HCT116 (cell line): ENCODE measurements at regions of chr19 and their contacts with region 1.

Region 1: GRCh38 chr19:41144403-41144802 is 30.2 kb downstream of the CYP2F1 start:
- DNase-seq: peak; percentile 82
- ATAC-seq: peak; percentile 98
- H3K4me3 ChIP-seq: no peak overlapping the region
- H3K27ac ChIP-seq: no peak overlapping the region
- H3K4me1 ChIP-seq: peaks cover 0 to 4% of the 10 kb centered on the region in 2 experiments; a peak in 1 of 4 replicates
- H3K27me3 ChIP-seq: no peaks in the 10 kb centered on the region
- CTCF ChIP-seq: peak; percentile 82 to 86 (median 84)
- POLR2A ChIP-seq: no peak
- RAD21 ChIP-seq: peak; percentile 96

Region 2: DNA sequence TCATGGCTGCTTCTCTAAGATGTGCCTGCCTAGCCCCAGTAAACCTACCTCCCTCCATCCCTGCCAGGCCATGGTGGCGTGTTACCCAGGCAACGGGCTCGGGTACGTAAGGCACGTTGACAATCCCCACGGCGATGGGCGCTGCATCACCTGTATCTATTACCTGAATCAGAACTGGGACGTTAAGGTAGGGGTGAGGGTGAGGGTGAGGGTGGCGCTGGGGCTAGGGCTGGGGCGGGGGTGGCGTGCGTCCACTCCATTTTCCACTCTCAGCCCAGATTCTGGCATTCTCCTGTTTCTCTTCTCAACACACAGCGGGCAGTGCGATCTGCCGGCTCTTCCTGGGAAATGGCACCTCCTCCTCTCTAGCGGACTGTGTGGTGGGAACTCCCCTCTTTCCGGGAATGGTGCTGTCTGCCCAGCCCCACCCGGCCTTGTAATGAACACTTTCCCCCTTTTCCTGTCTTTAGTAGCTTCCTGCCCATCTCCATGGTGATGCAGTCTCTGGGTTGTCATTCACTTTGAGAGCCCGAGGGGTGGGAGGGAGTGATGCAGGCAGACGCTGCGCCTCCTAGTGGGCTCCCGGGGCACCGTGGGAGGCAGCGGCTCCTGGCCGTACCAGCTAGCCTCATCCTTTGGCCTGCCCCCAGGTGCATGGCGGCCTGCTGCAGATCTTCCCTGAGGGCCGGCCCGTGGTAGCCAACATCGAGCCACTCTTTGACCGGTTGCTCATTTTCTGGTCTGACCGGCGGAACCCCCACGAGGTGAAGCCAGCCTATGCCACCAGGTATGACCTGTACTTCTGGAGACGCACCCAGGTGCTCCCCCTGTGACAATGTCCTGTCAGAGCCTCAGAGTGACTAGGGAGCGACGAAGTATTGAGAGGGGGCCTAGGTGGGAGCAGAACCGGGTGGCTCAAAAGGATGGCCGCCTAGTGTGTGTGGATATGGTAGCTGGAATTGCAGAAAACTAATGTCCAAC is 337.6 kb before region 1 on chr19:
- CTCF ChIA-PET with region 1: no interaction called
- POLR2A ChIA-PET with region 1: no interaction called
- RAD21 ChIA-PET with region 1: no interaction called
- intact Hi-C with region 1: loop called (anchors 10 kb)
- DNase-seq: peak; percentile 57
- ATAC-seq: peak; percentile 69
- H3K4me3 ChIP-seq: no peak overlapping the region
- H3K27ac ChIP-seq: peak overlapping the region; percentile 19; the same call in 1 of the 2 replicates
- H3K4me1 ChIP-seq: peaks cover 22 to 68% of the 10 kb centered on the region in 2 experiments
- H3K27me3 ChIP-seq: no peaks in the 10 kb centered on the region
- CTCF ChIP-seq: peak; percentile 72 to 93 (median 90); a peak in 5 of 6 replicates
- POLR2A ChIP-seq: no peak
- RAD21 ChIP-seq: peak; percentile 61

Region 3: DNA sequence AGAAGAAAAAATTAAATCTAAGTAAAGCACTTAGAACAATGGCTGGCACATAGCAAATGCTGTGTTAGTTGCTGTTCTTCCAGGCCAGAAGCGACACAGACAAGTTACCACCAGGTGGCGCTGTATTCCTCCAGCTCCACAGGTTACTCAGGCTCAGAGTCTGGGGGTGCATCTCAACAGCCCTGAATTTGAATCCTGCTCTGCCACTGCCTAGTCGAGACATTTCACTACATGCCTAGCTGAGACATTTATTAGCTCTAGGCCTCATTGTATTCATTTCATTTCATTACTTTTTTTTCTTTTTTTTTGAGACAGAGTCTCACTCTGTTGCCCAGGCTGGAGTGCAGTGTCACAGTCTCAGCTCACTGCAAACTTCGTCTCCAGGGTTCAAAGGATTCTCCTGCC is 169.8 kb before region 1 on chr19:
- CTCF ChIA-PET with region 1: interaction called, 31 read pairs
- POLR2A ChIA-PET with region 1: no interaction called
- RAD21 ChIA-PET with region 1: interaction called in 1 of 2 experiments, 3 read pairs
- intact Hi-C with region 1: loop called (anchors 1 kb)
- DNase-seq: peak; percentile 64
- ATAC-seq: peak; percentile 98
- H3K4me3 ChIP-seq: no peak overlapping the region
- H3K27ac ChIP-seq: no peak overlapping the region
- H3K4me1 ChIP-seq: no peaks in the 10 kb centered on the region
- H3K27me3 ChIP-seq: peaks cover 30% of the 10 kb centered on the region; the same call in 1 of the 2 replicates
- CTCF ChIP-seq: peak; percentile 75 to 88 (median 76)
- POLR2A ChIP-seq: no peak
- RAD21 ChIP-seq: peak; percentile 85

Region 4: DNA sequence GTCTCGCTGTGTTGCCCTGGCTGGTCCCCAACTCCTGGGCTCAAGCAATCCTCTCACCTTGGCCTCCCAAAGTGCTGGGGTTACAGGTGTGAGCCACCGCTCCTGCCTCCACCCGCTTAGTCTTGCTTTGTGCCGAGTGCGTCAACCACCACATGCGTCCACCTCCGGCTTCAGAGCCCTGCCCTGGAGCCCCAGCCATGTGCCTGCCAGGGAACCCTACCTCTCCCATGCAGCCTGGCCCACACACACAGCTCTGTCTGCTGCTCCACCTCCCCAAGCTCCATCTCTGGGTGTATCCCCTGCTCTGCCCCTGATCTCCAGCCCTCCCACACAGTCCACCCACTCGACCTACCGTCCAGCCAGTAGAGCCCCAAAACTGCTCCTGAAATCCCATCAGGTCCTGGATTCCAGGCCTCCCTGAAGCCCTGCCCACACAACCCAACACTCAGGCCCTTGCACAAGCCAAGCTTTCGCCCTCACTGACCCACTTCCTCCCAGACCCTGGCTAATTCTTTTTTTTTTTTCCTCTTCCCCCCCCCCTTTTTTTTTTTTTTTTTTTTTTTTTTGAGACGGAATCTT is 20.6 kb before region 1 on chr19:
- CTCF ChIA-PET with region 1: interaction called, 13 read pairs
- POLR2A ChIA-PET with region 1: no interaction called
- RAD21 ChIA-PET with region 1: interaction called in 1 of 2 experiments, 6 read pairs
- intact Hi-C with region 1: no loop called
- DNase-seq: no peak
- ATAC-seq: no peak
- H3K4me3 ChIP-seq: no peak overlapping the region
- H3K27ac ChIP-seq: no peak overlapping the region
- H3K4me1 ChIP-seq: peaks cover 0 to 13% of the 10 kb centered on the region in 2 experiments; a peak in 2 of 4 replicates
- H3K27me3 ChIP-seq: peaks cover 4% of the 10 kb centered on the region; the same call in 1 of the 2 replicates
- CTCF ChIP-seq: no peak
- POLR2A ChIP-seq: no peak
- RAD21 ChIP-seq: no peak